ENCODE measurements at regions of chr7 and their contacts with region 1.

Region 1: GRCh38 chr7:116525913-116526861 is 1.4 kb downstream of the CAV1 start:
- DNase-seq: peak; percentile 83 to 90
- ATAC-seq: peak; percentile 72 to 82
- H3K4me3 ChIP-seq: peak overlapping the region; percentile 78
- H3K27ac ChIP-seq: peak overlapping the region; percentile 99
- H3K4me1 ChIP-seq: peaks cover 68% of the 10 kb centered on the region
- CTCF ChIP-seq: peak; percentile 86
- EP300 ChIP-seq: no peak
- POLR2A ChIP-seq: peak; percentile 30; the same call in 1 of the 2 replicates
- RAD21 ChIP-seq: peak; percentile 67 to 94

Region 2: DNA sequence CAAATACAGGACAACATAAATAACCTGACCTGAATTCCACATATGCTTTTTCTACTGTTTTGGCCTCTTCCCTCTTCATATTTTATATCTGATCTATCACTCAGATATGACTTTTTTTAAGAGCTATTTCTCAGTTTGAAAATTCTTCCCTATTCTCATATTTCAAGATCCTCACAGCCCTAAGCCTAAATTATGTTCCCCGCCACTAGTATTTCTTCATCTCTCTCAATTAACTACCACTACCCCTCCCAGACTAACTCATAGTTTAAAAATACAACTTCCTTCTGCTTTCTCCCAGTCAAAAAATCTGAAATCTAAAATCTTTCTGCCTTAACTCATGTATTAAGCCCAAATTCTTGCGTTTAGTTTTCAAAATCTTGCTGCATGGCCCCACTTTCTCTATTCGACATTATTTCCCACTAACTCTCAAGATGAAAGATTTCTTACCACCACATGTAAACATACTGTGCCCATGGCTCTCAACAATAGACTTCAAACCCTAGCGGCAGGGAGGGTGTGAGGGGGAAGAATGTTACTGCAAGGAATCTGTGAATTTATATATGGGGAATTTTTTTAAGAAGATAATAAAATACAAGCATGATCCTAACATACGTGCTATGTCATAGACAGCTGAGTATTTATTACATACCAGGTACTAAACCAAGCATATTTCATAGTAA is 560.3 kb before region 1 on chr7:
- CTCF ChIA-PET with region 1: no interaction called
- POLR2A ChIA-PET with region 1: no interaction called
- DNase-seq: no peak
- ATAC-seq: no peak
- H3K4me3 ChIP-seq: no peak overlapping the region
- H3K27ac ChIP-seq: no peak overlapping the region
- H3K4me1 ChIP-seq: no peaks in the 10 kb centered on the region
- CTCF ChIP-seq: no peak
- EP300 ChIP-seq: no peak
- POLR2A ChIP-seq: no peak
- RAD21 ChIP-seq: no peak

Region 3: DNA sequence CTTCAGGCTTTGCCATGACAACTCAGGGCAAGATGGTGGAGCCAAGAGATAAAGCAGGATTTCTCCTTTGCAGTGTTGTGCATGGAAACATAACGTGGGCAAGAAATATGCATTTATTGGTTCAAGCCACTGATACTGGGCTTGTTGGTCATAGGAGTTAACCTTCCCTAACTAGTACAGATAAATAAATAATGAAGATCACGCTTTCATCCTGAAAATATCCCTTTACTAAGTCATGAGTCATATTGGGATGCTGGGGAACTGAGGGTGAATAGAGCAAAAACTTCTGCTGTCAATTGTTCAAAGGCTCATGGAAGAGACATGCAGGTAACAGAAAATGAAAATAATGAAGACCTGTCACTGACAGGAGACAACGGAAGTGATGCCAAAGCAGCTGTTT is 260.3 kb before region 1 on chr7:
- CTCF ChIA-PET with region 1: interaction called, 108 read pairs
- POLR2A ChIA-PET with region 1: interaction called, 28 read pairs
- DNase-seq: no peak
- ATAC-seq: no peak
- H3K4me3 ChIP-seq: no peak overlapping the region
- H3K27ac ChIP-seq: peak overlapping the region; percentile 11 to 55; a peak in 4 of 6 replicates
- H3K4me1 ChIP-seq: peaks cover 55% of the 10 kb centered on the region
- CTCF ChIP-seq: no peak
- EP300 ChIP-seq: no peak
- POLR2A ChIP-seq: no peak
- RAD21 ChIP-seq: no peak

Region 4: DNA sequence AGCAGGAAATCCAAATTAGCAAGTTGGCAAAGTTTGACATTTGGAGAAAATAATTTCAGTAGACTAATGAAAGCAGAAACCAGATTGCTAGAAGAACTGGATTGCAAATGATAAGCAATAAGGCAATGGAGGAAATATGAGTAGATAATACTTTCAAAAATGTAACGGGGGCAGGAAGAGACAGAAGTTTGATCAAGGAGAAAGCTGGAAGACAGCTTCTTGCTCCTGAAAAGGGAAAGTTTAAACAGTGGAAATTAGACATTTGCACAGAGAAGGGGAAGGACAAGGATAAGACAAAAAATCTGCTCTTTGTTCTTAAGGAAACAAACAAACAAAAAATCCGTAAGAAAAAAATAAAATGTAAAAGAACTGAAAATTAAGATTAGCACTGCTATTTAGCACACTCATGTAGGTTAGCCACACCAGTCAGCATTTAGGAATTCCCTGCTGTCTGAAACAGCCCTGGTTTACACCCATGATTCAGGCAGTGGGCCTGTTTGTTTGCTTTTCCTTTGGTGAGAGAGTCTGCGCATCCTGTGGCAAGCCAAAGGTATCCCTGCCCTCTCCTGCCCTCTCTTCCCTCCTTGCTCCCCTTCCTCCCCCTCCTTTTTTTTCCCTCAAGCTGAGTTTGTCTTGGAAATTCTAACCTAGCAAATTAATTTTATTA is 130.9 kb before region 1 on chr7:
- CTCF ChIA-PET with region 1: interaction called, 23 read pairs
- POLR2A ChIA-PET with region 1: interaction called, 10 read pairs
- DNase-seq: peak; percentile 93 to 96
- ATAC-seq: peak; percentile 100
- H3K4me3 ChIP-seq: no peak overlapping the region
- H3K27ac ChIP-seq: peak overlapping the region; percentile 86 to 88
- H3K4me1 ChIP-seq: peaks cover 52% of the 10 kb centered on the region
- CTCF ChIP-seq: no peak
- EP300 ChIP-seq: peak in 1 of 2 experiments; percentile 81; a peak in 3 of 5 replicates
- POLR2A ChIP-seq: no peak
- RAD21 ChIP-seq: peak; percentile 48 to 60

Region 5: GRCh38 chr7:116407165-116407564 is 119.0 kb before region 1 on chr7:
- CTCF ChIA-PET with region 1: no interaction called
- POLR2A ChIA-PET with region 1: no interaction called
- DNase-seq: no peak
- ATAC-seq: no peak
- H3K4me3 ChIP-seq: no peak overlapping the region
- H3K27ac ChIP-seq: peak overlapping the region in 1 of 2 experiments; percentile 59; a peak in 1 of 6 replicates
- H3K4me1 ChIP-seq: peaks cover 26% of the 10 kb centered on the region
- CTCF ChIP-seq: no peak
- EP300 ChIP-seq: no peak
- POLR2A ChIP-seq: no peak
- RAD21 ChIP-seq: no peak

Region 6: GRCh38 chr7:116464375-116464774 is 61.8 kb before region 1 on chr7:
- CTCF ChIA-PET with region 1: interaction called, 14 read pairs
- POLR2A ChIA-PET with region 1: interaction called, 5 read pairs
- DNase-seq: peak in 1 of 2 experiments; percentile 61
- ATAC-seq: peak in 1 of 2 experiments; percentile 62; a peak in 3 of 6 replicates
- H3K4me3 ChIP-seq: peak overlapping the region; percentile 11; the same call in 1 of the 3 replicates
- H3K27ac ChIP-seq: peak overlapping the region; percentile 90 to 94
- H3K4me1 ChIP-seq: peaks cover 71% of the 10 kb centered on the region
- CTCF ChIP-seq: no peak
- EP300 ChIP-seq: no peak
- POLR2A ChIP-seq: no peak
- RAD21 ChIP-seq: no peak

Region 7: DNA sequence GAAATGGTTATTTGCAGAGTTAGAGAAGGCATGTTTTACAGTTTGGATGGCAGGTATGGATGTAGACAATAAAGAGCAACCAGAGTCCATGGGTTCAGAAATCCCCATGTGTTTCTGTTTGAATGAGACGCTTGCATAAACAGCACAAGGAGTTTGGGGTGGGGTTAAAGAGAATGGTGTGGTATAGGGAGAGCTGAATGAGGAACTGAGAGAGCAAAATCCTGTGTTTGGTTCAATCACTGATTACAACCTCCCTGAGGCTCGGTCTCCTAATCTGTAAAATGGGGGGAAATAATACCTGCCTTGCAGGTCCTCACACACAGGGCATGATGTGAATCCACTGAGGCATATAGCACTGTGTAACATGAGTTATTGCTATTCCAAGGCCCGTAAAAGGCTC is 22.3 kb after region 1 on chr7:
- CTCF ChIA-PET with region 1: interaction called, 73 read pairs
- POLR2A ChIA-PET with region 1: no interaction called
- DNase-seq: no peak
- ATAC-seq: peak in 1 of 2 experiments; percentile 8; a peak in 3 of 6 replicates
- H3K4me3 ChIP-seq: no peak overlapping the region
- H3K27ac ChIP-seq: no peak overlapping the region
- H3K4me1 ChIP-seq: peaks cover 23% of the 10 kb centered on the region
- CTCF ChIP-seq: no peak
- EP300 ChIP-seq: no peak
- POLR2A ChIP-seq: no peak
- RAD21 ChIP-seq: no peak

Region 8: DNA sequence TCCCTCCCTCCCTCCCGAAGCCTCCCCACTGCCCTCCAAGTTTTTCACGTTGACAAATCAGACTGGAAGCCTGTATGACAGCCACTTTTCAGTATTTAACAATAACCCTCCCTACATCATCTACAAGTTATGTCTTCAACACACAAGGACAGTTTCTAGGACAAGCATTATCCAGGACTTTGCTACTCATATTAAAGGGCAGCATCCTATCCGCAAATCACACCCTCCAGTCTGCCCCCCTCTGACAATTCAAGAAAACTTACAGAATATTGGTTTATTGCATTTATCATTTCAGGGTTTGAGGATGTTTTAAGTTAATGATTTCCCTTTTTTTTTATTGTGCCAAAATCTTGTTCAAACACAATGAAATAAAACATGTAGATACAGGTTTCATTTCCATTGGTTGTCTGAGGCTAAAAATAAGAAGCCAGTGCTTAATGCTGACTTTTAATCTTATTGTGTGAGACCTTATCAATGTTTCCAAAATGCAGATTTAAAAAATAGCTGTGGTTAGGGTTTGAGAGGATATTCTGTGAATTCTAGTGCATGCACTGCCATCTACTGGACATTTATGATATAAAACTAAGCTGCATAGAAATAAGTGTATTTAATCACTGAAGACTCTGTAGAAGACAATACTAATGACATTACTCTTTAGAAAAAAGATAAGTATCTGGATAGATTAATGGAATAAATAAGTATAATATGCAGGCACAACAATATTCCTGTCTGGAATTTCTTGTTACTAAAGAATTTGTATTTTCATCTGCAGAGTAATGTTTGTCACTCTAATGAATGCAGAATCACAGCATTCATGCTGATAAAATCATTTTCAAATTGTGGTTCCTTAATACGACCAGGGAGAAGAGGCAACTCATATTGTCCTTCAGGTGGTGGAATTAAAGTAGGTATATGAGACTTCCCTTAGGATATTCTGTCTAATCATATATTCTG is 62.7 kb after region 1 on chr7:
- CTCF ChIA-PET with region 1: interaction called, 37 read pairs
- POLR2A ChIA-PET with region 1: interaction called, 15 read pairs
- DNase-seq: peak; percentile 29 to 63
- ATAC-seq: peak; percentile 69 to 73; a peak in 4 of 6 replicates
- H3K4me3 ChIP-seq: no peak overlapping the region
- H3K27ac ChIP-seq: peak overlapping the region; percentile 69 to 80
- H3K4me1 ChIP-seq: peaks cover 34% of the 10 kb centered on the region
- CTCF ChIP-seq: peak; percentile 94
- EP300 ChIP-seq: no peak
- POLR2A ChIP-seq: no peak
- RAD21 ChIP-seq: peak; percentile 97 to 98

Region 9: DNA sequence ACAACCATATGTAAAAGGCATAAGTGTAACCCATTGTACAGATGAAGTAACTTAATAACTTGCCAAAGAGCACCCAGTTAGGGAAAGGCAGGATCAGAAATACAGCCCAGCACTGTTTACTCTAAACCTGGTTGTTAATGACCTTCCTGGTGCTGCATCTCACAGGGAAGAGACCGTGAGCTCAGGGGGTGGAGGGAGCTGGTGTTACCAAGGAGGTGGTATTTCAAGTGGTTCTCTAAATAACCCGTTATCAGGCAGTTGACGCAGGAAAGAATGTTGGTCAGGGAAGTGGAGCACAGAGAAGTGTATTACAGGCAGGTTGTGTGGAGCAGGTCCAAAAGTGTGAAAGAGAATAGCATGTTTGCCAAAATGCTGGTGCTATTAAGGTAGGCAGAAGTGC is 422.7 kb after region 1 on chr7:
- CTCF ChIA-PET with region 1: no interaction called
- POLR2A ChIA-PET with region 1: no interaction called
- DNase-seq: no peak
- ATAC-seq: no peak
- H3K4me3 ChIP-seq: no peak overlapping the region
- H3K27ac ChIP-seq: no peak overlapping the region
- H3K4me1 ChIP-seq: peaks cover 10% of the 10 kb centered on the region; the same call in 2 of the 3 replicates
- CTCF ChIP-seq: no peak
- EP300 ChIP-seq: no peak
- POLR2A ChIP-seq: no peak
- RAD21 ChIP-seq: no peak